PC-3 (cell line): ENCODE measurements at regions of chr11 and their contacts with region 1.

Region 1: DNA sequence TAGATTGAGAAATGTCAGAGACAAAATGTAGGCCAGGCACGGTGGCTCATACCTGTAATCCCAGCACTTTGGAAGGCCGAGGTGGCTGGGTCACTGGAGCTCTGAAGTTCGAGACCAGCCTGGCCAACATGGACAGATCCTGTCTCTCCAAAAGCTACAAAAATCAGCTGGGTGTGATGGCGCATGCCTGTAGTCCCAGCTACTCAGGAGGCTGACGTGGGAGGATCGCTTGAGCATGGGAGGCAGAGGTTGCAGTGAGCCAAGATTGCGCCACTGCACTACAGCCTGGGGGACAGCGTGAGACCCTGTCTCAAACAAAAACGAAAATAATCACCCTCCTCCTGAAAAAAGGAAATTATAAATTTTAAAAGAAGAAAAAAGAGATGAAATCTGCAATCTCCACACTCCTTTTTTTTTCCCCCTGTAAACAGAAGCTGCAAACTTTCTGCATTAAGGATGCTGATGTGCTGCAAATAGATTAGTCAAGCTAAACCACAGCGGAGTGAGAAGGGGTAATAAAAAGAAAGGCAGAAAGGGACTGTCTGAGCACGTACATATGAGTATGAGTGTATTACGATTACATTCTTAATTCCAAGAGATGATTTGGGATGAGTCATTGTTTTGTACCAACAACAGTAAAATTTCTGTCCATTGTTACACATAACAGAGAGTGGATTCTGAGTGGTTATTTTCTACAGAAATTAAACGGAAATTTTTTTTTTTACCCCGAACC is 87.3 kb downstream of the SIK3 start:
- DNase-seq: peak; percentile 98
- ATAC-seq: peak; percentile 97
- H3K4me3 ChIP-seq: no peak overlapping the region
- H3K27ac ChIP-seq: peak overlapping the region; percentile 70
- H3K4me1 ChIP-seq: peaks cover 21% of the 10 kb centered on the region
- H3K27me3 ChIP-seq: no peaks in the 10 kb centered on the region
- CTCF ChIP-seq: no peak

Region 2: DNA sequence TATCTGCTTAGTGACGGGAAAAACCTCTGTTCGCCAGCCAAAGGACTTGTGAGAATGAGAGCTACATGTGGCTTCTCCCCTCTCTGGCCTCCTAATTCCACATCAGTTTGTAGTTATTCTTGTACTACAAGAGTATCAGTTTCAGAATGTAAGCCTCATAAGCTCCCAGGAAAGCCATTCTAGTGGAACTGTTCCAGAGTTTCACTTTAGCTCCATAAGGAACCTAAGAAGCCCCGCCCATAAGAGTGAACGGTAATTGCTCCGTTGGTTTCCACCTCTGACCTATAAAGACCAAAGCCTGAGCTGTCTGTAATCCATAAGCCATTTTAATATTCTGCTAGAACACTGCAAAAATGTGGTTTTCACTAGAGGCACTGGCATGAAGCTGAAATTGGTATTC is 34.2 kb after region 1 on chr11:
- CTCF ChIA-PET with region 1: no interaction called
- POLR2A ChIA-PET with region 1: no interaction called
- intact Hi-C with region 1: loop called (anchors 1 kb)
- DNase-seq: peak; percentile 49
- ATAC-seq: no peak; the same call in 1 of the 2 replicates
- H3K4me3 ChIP-seq: no peak overlapping the region
- H3K27ac ChIP-seq: peak overlapping the region; percentile 32; the same call in 1 of the 2 replicates
- H3K4me1 ChIP-seq: peaks cover 20% of the 10 kb centered on the region
- H3K27me3 ChIP-seq: no peaks in the 10 kb centered on the region
- CTCF ChIP-seq: no peak

Region 3: DNA sequence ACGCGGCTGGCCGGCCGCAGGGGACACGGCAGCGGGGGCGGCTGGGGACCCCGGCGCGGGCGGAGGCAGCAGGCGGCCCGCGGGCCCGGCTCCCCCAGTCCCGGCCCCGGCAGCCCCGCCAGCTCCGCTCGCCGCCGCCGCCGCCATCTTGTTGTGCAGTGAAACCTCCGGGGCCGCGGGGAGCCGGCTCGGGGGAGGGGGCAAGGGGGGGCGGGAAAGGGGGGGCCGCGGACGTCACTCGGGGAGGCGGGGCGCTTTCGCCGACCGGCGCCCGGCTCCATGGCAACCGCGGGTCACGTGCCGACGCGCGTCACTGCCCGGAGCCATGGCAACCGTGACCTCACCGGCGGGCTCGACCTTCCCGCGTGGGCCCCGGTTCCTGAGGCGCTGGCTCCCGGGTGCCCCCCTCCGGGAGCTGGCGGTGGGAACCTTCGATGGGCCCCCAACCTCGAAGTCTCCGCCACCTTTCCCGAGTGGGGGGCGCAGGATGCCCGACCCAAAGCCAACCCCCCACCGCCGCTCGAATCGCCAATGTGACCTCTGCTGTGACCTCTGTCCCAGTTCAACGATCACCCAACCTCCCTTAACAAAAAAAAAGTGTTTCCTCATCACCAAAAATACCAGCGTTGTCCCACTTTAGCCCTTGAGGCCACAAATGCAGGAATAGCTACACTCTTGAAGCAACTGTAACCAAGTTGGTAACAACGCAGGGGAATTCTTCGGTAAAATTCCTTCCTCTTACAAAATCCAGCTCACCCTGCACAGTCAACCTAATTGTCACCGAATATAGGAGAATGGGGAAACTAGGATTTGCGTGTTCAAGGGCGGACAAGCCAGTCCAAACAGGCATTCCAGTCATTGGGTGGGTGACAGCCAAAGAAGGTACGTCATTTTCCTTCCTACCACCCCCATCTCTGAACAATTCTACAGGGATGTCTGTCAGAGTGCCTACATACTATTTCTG is 87.6 kb after region 1 on chr11 and contains the start of gene SIK3:
- CTCF ChIA-PET with region 1: no interaction called
- POLR2A ChIA-PET with region 1: no interaction called
- intact Hi-C with region 1: loop called (anchors 1 kb)
- DNase-seq: peak; percentile 92
- ATAC-seq: peak; percentile 80
- H3K4me3 ChIP-seq: peak within 1 kb of the TSS; percentile 95
- H3K27ac ChIP-seq: peak within 1 kb of the TSS; percentile 90
- H3K4me1 ChIP-seq: peaks cover 41% of the 10 kb centered on the region
- H3K27me3 ChIP-seq: no peaks in the 10 kb centered on the region
- CTCF ChIP-seq: no peak; the same call in 1 of the 2 replicates
- total RNA-seq, gene SIK3: 14.5 and 17.4 TPM in 2 replicates